ENCODE measurements at regions of chr4 and their contacts with region 1.

Region 1: DNA sequence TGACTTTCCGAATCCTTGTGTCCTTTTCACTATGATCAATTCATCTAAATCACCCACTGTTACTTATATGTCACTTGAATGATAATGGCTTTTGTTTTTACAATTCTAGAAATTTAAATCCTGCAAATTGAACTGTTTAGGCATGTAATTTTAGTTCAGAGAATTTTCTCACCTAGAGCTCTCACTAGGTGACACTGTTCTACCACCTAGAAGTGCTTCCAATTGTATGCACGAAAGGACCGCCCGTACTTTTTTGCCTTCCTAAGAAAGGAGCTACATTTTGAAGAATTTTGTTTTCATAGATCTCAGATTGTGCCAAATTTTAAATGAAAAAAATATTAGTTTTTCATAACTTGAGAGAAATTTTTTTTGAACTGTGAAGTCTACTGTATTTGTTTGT is 481.6 kb upstream of the FSTL5 start:
- DNase-seq: no peak
- ATAC-seq: peak in 3 of 4 donors; percentile 55 to 69 (median 55)
- H3K4me3 ChIP-seq: no peak overlapping the region
- H3K27ac ChIP-seq: no peak overlapping the region
- H3K4me1 ChIP-seq: no peaks in the 10 kb centered on the region
- H3K27me3 ChIP-seq: no peaks in the 10 kb centered on the region
- CTCF ChIP-seq: peak; percentile 62

Region 2: DNA sequence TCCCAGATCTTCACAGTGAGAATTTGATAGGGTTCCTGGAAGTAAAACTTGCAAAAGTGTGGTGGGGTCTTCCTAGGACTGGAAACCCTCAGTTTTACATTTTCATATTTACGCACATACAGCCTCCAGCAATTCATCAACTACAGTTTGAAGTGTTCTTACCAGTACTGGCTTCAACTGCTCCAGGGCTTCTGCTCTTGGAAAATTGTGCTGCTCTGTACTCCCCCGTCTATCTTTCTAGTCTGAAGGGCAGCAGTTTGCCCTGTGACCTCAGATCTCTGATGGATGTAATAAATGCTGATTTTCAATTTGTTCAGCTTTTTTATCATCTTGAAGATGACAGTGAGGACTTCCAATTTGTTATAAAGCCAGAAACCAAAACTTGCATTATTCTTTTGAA is 22.7 kb before region 1 on chr4:
- intact Hi-C with region 1: no loop called
- DNase-seq: no peak
- ATAC-seq: no peak
- H3K4me3 ChIP-seq: no peak overlapping the region
- H3K27ac ChIP-seq: no peak overlapping the region
- H3K4me1 ChIP-seq: no peaks in the 10 kb centered on the region
- H3K27me3 ChIP-seq: no peaks in the 10 kb centered on the region
- CTCF ChIP-seq: no peak

Region 3: DNA sequence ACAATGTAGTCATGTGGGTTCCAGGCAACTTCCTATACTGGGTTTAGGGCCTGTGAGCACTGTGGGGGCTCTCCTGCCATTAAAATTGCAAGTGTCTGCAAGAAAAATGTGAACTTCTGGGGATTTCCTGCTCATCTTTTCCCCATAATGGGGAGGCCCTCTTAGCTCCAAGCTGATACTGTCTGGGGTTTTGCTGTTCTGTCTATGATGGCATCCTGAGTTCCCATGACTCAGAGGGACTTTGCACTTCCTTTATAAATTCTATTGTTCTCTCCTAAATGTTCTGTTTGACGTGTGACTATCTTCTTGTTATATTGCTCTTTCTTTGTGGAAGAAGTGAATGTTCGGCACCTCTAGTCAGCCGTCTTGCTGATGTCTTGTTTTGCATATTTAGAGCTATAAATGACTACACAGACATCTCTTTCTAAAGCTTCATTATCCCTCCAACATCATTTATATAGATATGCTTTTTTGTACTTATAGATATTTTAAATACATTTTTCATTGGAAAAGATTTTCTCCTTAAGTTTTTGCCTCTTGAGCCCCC is 55.5 kb after region 1 on chr4:
- intact Hi-C with region 1: no loop called
- DNase-seq: no peak
- ATAC-seq: no peak
- H3K4me3 ChIP-seq: no peak overlapping the region
- H3K27ac ChIP-seq: no peak overlapping the region
- H3K4me1 ChIP-seq: peaks cover 10% of the 10 kb centered on the region
- H3K27me3 ChIP-seq: no peaks in the 10 kb centered on the region
- CTCF ChIP-seq: no peak

Region 4: DNA sequence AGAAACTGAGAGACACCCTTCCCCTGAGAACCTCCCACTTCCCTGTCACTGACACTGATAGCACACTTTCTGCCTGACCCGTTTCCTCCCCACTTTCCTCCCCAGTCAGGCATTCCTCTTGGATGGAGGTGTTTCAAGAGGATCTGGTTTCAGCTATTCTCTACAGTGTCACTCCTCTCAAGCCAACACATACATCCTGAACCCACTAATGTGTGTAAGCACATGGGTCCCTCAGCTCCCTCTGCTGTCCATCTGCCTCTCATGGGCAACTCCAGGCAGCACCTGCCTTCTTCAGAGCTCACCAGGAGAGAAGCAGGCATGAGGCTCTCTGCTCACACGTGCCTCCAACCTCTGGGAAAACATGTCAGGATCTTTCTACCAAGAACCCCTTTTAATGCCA is 313.7 kb after region 1 on chr4:
- intact Hi-C with region 1: loop called in 1 of 2 experiments (anchors 5 kb)
- DNase-seq: no peak
- ATAC-seq: no peak
- H3K4me3 ChIP-seq: no peak overlapping the region
- H3K27ac ChIP-seq: no peak overlapping the region
- H3K4me1 ChIP-seq: no peaks in the 10 kb centered on the region
- H3K27me3 ChIP-seq: no peaks in the 10 kb centered on the region
- CTCF ChIP-seq: peak; percentile 12

Region 5: GRCh38 chr4:163042306-163042705 is 396.9 kb after region 1 on chr4:
- intact Hi-C with region 1: loop called in 1 of 2 experiments (anchors 5 kb)
- DNase-seq: no peak
- ATAC-seq: no peak
- H3K4me3 ChIP-seq: no peak overlapping the region
- H3K27ac ChIP-seq: no peak overlapping the region
- H3K4me1 ChIP-seq: no peaks in the 10 kb centered on the region
- H3K27me3 ChIP-seq: no peaks in the 10 kb centered on the region
- CTCF ChIP-seq: no peak

Measured in psoas muscle (tissue), 8 donors.